ENCODE measurements at regions of chr7 and their contacts with region 1.

Region 1: GRCh38 chr7:30134611-30135545 is at the start of gene MTURN:
- DNase-seq: peak; percentile 92 to 96
- ATAC-seq: peak; percentile 88
- H3K4me3 ChIP-seq: peak within 1 kb of the TSS; percentile 92 to 97
- H3K27ac ChIP-seq: peak within 1 kb of the TSS; percentile 86 to 91
- H3K4me1 ChIP-seq: peaks cover 0 to 3% of the 10 kb centered on the region in 2 donors
- H3K27me3 ChIP-seq: no peaks in the 10 kb centered on the region
- total RNA-seq, gene MTURN: 43.4 to 72.5 TPM

Region 2: DNA sequence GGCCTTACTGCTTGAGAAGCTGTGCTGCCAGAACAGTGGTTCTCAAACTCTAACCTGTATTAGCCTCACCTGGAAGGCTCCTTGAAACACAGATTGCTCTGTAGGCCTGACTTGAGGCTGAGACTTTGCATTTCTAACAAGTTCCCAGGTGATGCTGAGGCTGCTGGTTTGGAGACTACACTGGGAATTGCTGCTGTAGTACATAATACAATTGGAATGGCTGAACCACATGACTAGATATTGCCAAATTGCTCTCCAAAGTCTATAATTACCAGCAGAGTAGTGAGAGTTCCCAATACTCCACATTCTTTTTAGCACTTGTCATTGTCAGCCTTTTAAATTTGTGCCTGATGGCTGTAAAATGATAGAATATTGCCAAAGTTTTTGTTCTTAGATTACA is 66.8 kb before region 1 on chr7:
- intact Hi-C with region 1: loop called in 1 of 2 experiments (anchors 5 kb)
- DNase-seq: no peak
- ATAC-seq: peak; percentile 83
- H3K4me3 ChIP-seq: no peak overlapping the region
- H3K27ac ChIP-seq: peak overlapping the region in 1 of 2 donors; percentile 69
- H3K4me1 ChIP-seq: no peaks in the 10 kb centered on the region
- H3K27me3 ChIP-seq: no peaks in the 10 kb centered on the region

Region 3: DNA sequence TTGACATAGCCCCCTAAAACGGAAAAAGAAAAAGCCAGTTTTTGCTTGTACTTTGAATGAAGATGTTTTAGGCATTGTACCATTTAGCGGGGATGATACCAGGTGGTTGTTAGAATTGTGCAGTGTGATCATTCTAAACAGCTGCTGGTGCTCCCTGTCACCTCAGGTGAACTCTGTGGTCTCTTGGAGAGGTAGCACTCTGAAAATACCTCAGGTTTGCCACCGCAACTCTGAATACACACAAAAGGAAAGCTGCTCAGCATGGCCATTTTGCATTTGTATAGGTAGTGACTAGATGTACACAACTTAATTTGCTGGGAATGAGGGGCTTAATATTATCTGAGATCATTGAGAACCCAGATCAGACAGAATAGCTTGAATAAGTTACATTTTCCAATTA is 54.1 kb before region 1 on chr7:
- intact Hi-C with region 1: no loop called
- DNase-seq: no peak
- ATAC-seq: no peak
- H3K4me3 ChIP-seq: no peak overlapping the region
- H3K27ac ChIP-seq: no peak overlapping the region
- H3K4me1 ChIP-seq: no peaks in the 10 kb centered on the region
- H3K27me3 ChIP-seq: no peaks in the 10 kb centered on the region